AG04450 (cell line): ENCODE measurements at regions of chr10 and their contacts with region 1.

Region 1: DNA sequence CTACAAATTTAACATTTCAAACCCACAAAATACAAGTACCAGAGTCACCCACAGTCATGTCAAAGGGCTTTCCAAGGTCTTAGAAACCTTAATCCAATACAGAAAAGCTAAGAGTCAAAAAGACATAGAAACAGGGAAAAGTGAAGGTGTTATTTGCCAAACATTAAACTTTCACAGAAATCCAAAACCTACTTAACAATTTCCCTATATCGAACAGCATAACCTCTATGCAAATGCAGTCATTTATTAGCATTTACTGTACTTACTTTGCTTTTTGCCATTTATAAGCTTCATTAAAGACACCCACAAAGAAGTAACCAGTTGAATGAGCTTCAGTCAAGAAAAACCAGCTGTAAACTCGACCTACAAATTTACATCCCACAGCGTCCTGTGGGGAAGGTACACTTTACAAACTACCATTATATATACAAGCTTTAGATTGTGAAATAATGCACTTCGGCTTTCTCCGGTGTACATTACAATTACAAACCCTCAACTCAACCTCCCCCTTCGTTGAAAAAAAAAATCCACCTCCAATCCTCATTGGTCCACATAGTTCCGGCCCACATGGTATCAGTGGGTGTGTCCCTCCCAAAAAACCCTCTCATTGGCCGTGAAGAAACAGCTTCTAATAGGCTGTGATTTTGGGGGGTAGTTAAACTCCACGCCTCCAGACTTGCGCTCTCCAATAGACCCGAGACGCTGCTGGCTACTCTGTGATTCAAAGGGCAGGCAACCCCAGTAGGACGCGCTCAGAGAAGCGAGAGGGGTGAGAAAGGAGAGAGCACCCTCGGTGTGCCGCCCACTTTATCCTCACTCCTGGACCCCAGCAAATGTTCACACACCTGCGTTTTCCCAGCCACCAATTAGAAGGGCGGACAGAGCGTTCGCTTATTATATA is 1.4 kb downstream of the PANK1 start:
- DNase-seq: peak; percentile 91
- H3K4me3 ChIP-seq: peak overlapping the region; percentile 79
- H3K27ac ChIP-seq: peak overlapping the region; percentile 25
- H3K27me3 ChIP-seq: no peaks in the 10 kb centered on the region
- CTCF ChIP-seq: no peak

Region 2: DNA sequence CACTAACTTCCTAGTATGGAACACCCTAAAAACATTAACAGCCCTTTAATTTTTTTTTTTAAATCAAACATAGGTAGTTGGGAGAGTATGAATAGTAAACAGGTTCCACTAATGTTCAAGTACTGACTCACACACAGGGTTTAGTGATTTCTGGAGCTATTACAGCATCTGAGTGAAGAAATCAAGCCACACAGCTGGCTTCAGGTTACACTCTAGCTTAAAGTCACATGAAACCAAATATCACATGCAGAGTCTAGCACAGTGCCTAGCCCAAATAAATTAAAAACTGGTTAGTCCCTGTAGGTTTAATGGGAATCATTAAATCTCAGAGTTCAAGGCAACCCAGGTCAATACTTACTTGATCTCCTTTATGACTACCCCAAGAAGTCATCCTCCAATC is 10.2 kb before region 1 on chr10:
- CTCF ChIA-PET with region 1: no interaction called
- POLR2A ChIA-PET with region 1: interaction called, 16 read pairs
- DNase-seq: peak; percentile 63
- H3K4me3 ChIP-seq: no peak overlapping the region
- H3K27ac ChIP-seq: no peak overlapping the region
- H3K27me3 ChIP-seq: no peaks in the 10 kb centered on the region
- CTCF ChIP-seq: no peak

Region 3: DNA sequence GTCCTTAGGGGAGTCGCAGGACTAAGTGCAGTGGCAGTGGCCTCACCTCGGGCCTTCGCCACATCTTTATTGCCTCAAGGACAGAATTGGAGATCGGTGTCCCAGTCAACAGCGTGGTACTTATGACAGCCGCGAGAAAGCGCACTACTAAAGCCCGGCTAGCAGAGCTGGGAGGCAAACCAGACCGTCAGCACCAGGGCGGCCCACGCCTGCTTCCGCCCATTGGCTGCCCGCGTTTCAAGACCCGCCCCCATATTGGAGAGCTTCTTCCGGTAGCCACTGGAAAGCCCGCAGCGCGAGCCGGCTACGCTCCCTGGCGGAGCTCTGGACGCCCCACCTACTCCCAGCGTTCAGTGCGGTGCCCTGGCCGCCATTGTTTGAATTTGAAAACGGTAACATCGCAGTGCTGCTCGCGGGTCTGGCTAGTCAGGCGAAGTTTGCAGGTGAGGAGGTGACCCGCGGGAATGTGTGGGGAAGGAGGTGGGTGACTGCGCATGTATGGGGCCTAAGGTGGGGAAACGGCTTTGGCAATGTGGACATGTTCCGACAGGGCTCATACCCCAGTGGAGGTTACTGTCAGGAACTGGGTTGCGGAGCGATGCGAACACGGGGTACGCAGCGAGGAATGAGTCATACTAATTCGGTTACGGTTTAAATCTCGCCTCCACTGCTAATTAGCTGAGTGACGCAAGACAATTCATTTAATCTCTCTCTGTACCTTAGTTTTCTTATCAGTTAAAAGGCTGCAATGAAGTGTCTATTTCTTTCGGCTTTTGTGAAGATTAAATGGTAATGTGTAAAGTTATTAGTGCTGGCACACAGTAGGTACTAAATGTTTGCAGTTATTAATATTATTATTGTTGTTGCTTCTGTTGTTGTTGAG is 57.8 kb after region 1 on chr10 and contains the start of gene KIF20B:
- CTCF ChIA-PET with region 1: interaction called, 9 read pairs
- POLR2A ChIA-PET with region 1: interaction called, 34 read pairs
- DNase-seq: peak; percentile 88
- H3K4me3 ChIP-seq: peak within 1 kb of the TSS; percentile 98
- H3K27ac ChIP-seq: peak within 1 kb of the TSS; percentile 75
- H3K27me3 ChIP-seq: no peaks in the 10 kb centered on the region
- CTCF ChIP-seq: peak; percentile 45
- polyA plus RNA-seq, gene KIF20B: 2.4 and 4.5 TPM in 2 replicates